CD4-positive, alpha-beta memory T cell (primary cell): ENCODE measurements at regions of chr12 and their contacts with region 1.

Region 1: GRCh38 chr12:4148418-4149056 is 125.0 kb upstream of the CCND2 start:
- DNase-seq: peak; percentile 48 to 82 (median 57)
- H3K4me3 ChIP-seq: no peak overlapping the region
- H3K4me3 Mint-ChIP-seq: peak overlapping the region in 2 of 8 donors; percentile 22 to 26
- H3K27ac ChIP-seq: no peak overlapping the region
- H3K27ac Mint-ChIP-seq: peak overlapping the region in 6 of 7 donors; percentile 75 to 97 (median 84)
- H3K4me1 ChIP-seq: peaks cover 69% of the 10 kb centered on the region
- H3K4me1 Mint-ChIP-seq: peaks cover 57 to 90% (median 69%) of the 10 kb centered on the region in 4 donors
- H3K27me3 ChIP-seq: no peaks in the 10 kb centered on the region
- H3K27me3 Mint-ChIP-seq: no peaks in the 10 kb centered on the region

Region 2: DNA sequence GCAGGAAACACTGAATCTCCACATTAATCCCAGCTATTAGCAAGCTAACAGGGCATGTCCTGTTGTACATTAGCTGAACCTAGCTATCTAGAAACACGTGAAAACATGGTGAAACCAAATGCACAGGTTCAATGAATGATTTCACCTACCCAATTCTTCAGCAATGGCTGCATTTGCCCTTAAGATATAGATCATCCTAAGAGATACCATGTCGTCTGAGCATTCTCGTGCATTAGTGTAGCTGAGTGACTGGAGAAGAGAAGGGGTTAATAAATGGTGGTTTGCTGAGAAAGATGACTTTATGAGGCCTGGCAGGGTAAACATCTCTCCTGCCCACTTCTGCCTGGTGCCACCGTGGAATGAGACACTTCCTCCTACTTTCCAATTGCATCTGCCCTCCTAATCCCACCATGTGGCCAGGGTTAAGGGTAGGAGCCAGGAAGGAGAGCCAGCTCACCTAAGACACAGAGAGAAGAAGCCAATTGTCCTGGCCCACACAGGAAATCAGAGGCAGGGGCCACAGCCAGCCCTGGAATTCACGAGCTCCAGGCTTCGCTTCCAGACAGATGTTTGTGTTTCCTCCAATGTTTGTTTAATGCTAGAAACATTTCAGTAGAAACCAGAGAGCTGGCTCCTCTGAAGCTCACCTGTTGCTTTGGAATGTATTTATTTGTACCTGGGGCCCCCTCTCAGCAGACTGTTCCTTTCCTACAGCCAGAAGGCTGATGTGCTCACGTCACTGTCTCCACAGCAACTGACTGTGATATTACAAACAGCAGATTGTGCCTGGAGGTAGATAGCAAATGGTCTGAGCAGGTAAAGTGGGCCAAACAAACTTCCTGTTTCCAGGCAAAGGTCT is 149.3 kb before region 1 on chr12:
- CTCF ChIA-PET with region 1: interaction called, 3 read pairs
- POLR2A ChIA-PET with region 1: no interaction called
- intact Hi-C with region 1: loop called (anchors 1 kb)
- DNase-seq: peak; percentile 39 to 60 (median 55)
- H3K4me3 ChIP-seq: no peak overlapping the region
- H3K4me3 Mint-ChIP-seq: peak overlapping the region in 1 of 8 donors; percentile 15
- H3K27ac ChIP-seq: no peak overlapping the region
- H3K27ac Mint-ChIP-seq: peak overlapping the region in 6 of 7 donors; percentile 70 to 87 (median 84)
- H3K4me1 ChIP-seq: peaks cover 9% of the 10 kb centered on the region
- H3K4me1 Mint-ChIP-seq: peaks cover 7 to 30% (median 20%) of the 10 kb centered on the region in 4 donors
- H3K27me3 ChIP-seq: no peaks in the 10 kb centered on the region
- H3K27me3 Mint-ChIP-seq: no peaks in the 10 kb centered on the region

Region 3: DNA sequence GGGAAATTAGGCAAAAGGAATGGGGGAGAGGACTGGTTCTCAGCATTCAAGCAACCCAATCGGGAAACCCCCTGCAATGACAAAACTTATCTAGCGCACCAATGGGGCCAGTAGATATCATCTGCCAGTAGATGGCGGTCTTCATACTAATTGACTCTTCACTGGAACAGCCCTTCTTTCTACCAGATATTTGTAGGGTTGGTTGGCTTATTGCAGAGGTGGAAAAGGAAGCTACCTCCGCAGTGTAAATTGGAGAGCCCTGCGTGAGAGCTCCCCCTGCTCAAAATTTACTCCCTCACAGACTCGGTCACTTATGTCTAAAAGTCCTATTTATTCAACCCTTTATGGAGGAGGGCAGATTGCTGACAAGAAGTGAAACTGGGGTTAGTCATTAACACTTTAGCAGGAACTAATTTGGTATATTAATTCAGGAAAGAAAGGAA is 41.1 kb before region 1 on chr12:
- CTCF ChIA-PET with region 1: interaction called, 26 read pairs
- POLR2A ChIA-PET with region 1: interaction called, 12 read pairs
- intact Hi-C with region 1: loop called (anchors 1 kb)
- DNase-seq: peak; percentile 78 to 87 (median 83)
- H3K4me3 ChIP-seq: no peak overlapping the region
- H3K4me3 Mint-ChIP-seq: peak overlapping the region in 7 of 8 donors; percentile 26 to 67 (median 47)
- H3K27ac ChIP-seq: no peak overlapping the region
- H3K27ac Mint-ChIP-seq: peak overlapping the region in 6 of 7 donors; percentile 80 to 94 (median 92)
- H3K4me1 ChIP-seq: peaks cover 10% of the 10 kb centered on the region
- H3K4me1 Mint-ChIP-seq: peaks cover 8 to 15% (median 11%) of the 10 kb centered on the region in 4 donors
- H3K27me3 ChIP-seq: no peaks in the 10 kb centered on the region
- H3K27me3 Mint-ChIP-seq: peaks cover 0 to 2% of the 10 kb centered on the region in 2 donors

Region 4: DNA sequence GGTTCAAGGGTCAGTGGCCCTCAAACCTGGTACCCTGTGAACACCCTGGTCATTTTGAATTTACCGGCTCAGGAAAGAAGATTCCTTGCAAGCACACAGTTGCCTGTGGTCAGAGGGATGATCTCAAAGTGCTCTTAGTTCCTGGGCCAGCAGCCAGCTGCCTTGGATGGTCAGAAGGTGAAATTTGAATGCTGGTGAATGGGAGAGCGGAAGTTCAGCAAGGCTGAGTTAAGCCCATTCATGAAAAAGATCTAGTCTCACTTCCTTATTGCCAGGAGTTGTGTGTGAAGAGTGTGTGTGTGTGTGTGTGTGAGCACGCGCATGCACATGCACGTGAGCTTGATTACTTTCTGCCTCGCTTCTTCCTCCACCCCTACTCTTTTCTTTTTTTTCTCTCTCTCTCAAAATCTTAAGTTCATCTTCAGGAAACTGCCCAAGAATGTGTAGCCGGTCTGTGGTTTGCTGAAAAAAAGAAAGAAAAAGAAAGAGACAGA is 30.5 kb before region 1 on chr12:
- CTCF ChIA-PET with region 1: interaction called, 19 read pairs
- POLR2A ChIA-PET with region 1: interaction called, 8 read pairs
- intact Hi-C with region 1: loop called (anchors 2 kb)
- DNase-seq: peak in 4 of 5 donors; percentile 34 to 45 (median 40)
- H3K4me3 ChIP-seq: no peak overlapping the region
- H3K4me3 Mint-ChIP-seq: peak overlapping the region; percentile 67 to 86 (median 80)
- H3K27ac ChIP-seq: no peak overlapping the region
- H3K27ac Mint-ChIP-seq: peak overlapping the region; percentile 31 to 92 (median 78)
- H3K4me1 ChIP-seq: peaks cover 50% of the 10 kb centered on the region
- H3K4me1 Mint-ChIP-seq: peaks cover 40 to 57% (median 45%) of the 10 kb centered on the region in 4 donors
- H3K27me3 ChIP-seq: no peaks in the 10 kb centered on the region
- H3K27me3 Mint-ChIP-seq: peaks cover 0 to 6% of the 10 kb centered on the region in 2 donors

Region 5: DNA sequence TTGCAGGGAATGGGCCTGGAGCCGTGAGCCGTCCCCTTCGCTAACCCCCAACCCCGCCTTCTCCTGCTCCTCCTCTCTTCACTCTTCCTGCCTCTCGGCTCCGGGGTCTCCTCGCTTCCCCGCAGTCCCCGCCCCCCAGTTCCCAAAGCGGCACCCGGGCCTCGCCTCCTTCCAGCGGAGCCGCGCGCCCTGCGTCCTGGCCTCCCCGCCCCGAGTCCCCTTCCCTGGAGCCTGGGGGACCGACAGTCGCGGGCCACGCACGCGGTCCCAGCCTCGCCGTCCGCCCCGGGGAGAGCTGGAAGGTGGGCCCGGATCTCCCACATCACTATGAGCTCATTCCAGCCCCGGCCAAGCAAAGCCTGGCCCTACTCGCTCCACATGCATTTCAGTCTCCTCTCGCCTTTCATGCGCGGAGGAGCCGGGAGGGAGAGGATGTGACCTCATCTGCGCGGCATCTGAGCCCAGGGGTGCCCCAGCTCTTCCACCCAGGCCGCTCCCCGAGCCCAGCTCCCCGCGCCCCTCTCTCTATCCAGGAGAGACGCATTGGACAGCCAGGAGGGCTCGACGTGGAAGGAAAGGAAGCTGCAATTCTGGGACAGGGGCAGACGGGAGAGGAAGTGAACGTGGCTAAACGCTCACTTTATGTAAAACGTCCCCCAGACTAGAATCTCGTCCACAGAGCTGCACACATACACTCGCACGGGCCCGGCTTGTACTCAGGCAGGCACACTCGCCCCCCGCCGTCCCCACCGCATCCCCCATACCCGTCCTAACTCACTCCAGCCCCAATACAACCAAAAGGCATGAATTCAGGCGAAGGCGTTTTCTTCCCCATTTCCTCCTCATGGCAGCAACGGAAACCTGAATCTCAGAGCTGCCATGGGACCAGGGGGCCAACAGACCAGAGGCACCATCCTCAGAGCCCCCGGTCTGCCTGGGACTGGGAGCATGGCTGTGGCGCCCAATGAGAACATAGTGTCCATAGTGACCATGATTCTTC is 16.3 kb after region 1 on chr12:
- CTCF ChIA-PET with region 1: interaction called, 22 read pairs
- POLR2A ChIA-PET with region 1: interaction called, 17 read pairs
- intact Hi-C with region 1: loop called (anchors 2 kb)
- DNase-seq: peak; percentile 40 to 60 (median 59)
- H3K4me3 ChIP-seq: peak overlapping the region; percentile 9 to 75
- H3K4me3 Mint-ChIP-seq: peak overlapping the region; percentile 83 to 94 (median 90)
- H3K27ac ChIP-seq: peak overlapping the region; percentile 50
- H3K27ac Mint-ChIP-seq: peak overlapping the region; percentile 28 to 96 (median 91)
- H3K4me1 ChIP-seq: peaks cover 12% of the 10 kb centered on the region
- H3K4me1 Mint-ChIP-seq: peaks cover 13 to 29% (median 22%) of the 10 kb centered on the region in 4 donors
- H3K27me3 ChIP-seq: no peaks in the 10 kb centered on the region
- H3K27me3 Mint-ChIP-seq: no peaks in the 10 kb centered on the region

Region 6: DNA sequence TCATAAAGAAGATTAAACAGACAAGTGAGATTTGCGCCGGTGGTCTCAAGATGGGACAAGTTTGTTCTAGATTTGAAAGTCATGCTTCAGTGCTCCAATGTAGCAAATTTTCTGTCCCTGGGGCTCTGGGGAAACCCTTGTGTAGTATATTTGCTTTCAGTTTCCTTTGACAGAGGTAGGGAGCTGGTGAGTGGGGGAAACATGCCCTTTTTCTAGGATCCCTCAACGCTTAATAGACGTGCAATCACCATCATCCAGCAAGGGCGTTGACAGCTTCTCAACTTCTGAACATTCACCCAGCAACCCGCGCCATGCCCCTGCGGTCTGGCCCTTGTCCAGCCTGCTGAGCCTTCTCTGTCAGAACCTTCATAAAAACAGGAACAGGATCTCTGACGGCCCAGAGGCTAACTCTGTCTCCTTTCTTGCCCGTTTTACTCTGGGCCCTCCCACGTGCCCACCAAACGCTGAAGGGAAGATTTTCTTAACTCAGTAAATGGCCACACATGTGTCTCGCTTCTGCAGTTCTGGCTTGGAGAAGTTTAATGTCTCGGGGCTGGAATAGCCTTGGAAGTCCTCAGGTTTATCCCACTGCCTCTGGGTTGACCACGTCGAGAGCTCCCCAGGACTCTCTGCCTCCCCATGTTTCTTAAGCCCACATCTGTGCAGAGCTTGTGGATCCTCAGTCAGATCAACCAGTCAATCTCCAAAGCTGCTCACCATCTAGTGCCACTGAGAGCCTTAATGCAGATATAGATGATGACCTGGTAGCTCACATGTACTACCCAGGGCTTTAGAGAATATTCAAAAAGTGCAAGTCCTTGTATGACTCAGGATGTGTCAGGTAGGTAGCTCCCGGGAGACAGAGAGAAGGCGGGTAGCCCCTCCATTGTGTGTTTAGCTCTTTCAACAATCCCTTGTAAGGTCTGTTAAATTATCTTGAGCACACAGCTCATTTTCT is 67.0 kb after region 1 on chr12:
- CTCF ChIA-PET with region 1: interaction called, 4 read pairs
- POLR2A ChIA-PET with region 1: no interaction called
- intact Hi-C with region 1: loop called (anchors 5 kb)
- DNase-seq: peak in 4 of 5 donors; percentile 20 to 30 (median 25)
- H3K4me3 ChIP-seq: no peak overlapping the region
- H3K4me3 Mint-ChIP-seq: peak overlapping the region; percentile 55 to 84 (median 64)
- H3K27ac ChIP-seq: no peak overlapping the region
- H3K27ac Mint-ChIP-seq: peak overlapping the region; percentile 24 to 78 (median 44)
- H3K4me1 ChIP-seq: peaks cover 27% of the 10 kb centered on the region
- H3K4me1 Mint-ChIP-seq: peaks cover 15 to 37% (median 28%) of the 10 kb centered on the region in 4 donors
- H3K27me3 ChIP-seq: no peaks in the 10 kb centered on the region
- H3K27me3 Mint-ChIP-seq: no peaks in the 10 kb centered on the region

Region 7: GRCh38 chr12:4330203-4330602 is 181.7 kb after region 1 on chr12:
- CTCF ChIA-PET with region 1: no interaction called
- POLR2A ChIA-PET with region 1: no interaction called
- intact Hi-C with region 1: no loop called
- DNase-seq: no peak
- H3K4me3 ChIP-seq: no peak overlapping the region
- H3K4me3 Mint-ChIP-seq: no peak overlapping the region
- H3K27ac ChIP-seq: no peak overlapping the region
- H3K27ac Mint-ChIP-seq: no peak overlapping the region
- H3K4me1 ChIP-seq: no peaks in the 10 kb centered on the region
- H3K4me1 Mint-ChIP-seq: peaks cover 10 to 31% (median 20%) of the 10 kb centered on the region in 4 donors
- H3K27me3 ChIP-seq: no peaks in the 10 kb centered on the region
- H3K27me3 Mint-ChIP-seq: no peaks in the 10 kb centered on the region